Mucosa of descending colon (tissue), 3 donors: ENCODE measurements at regions of chr10 and their contacts with region 1.

Region 1: DNA sequence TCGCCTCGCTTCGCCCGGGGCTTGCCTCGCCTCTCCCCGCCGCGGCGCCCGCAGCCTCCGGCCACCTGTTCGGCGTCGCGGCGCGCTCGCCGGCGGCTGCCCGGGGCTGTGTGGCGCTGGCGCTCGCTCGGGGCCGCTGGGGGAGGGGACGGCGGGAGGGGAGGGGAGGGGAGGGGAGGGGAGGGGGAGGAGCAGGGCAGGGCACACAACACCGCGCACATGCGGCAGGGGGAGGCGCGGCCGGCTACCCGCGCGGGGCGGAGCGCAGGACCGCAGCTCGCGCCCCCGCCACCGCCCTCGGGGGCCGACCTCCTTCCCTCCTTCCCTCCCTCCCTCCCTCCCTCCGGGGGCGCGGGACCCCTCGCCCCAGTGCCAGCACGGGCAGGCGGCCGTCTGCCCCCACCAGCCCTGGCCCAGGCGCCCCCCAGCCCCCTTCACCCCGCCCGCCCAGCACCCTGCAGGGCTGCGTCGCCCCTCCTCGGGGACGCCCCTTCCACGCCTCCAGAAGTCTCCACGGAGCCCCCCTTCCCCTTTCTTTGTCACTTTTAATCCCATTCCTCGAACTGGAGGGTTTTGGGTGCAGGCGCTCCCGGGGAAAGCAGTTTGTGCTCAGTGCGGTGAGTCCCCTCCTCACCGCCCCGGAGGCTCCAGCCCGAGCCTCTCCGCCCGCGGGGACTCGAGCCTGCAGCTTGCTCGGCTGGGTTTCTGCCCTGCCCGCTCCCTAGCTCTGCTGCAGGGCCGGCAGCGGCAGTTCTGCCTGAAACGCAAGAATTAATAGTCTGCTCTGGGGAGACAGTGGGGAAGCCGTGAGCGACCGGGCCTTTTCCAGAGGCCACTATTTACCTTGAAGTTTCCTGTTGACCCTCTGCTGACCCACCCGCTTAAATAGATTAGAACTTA is at the start of gene PARD3:
- DNase-seq: peak; percentile 66 to 81 (median 76)
- ATAC-seq: peak; percentile 83
- H3K4me3 ChIP-seq: peak within 1 kb of the TSS; percentile 90
- H3K4me1 ChIP-seq: peaks cover 4% of the 10 kb centered on the region
- CTCF ChIP-seq: no peak
- total RNA-seq, gene PARD3: 39.5 to 87.9 (median 47.0) TPM

Region 2: DNA sequence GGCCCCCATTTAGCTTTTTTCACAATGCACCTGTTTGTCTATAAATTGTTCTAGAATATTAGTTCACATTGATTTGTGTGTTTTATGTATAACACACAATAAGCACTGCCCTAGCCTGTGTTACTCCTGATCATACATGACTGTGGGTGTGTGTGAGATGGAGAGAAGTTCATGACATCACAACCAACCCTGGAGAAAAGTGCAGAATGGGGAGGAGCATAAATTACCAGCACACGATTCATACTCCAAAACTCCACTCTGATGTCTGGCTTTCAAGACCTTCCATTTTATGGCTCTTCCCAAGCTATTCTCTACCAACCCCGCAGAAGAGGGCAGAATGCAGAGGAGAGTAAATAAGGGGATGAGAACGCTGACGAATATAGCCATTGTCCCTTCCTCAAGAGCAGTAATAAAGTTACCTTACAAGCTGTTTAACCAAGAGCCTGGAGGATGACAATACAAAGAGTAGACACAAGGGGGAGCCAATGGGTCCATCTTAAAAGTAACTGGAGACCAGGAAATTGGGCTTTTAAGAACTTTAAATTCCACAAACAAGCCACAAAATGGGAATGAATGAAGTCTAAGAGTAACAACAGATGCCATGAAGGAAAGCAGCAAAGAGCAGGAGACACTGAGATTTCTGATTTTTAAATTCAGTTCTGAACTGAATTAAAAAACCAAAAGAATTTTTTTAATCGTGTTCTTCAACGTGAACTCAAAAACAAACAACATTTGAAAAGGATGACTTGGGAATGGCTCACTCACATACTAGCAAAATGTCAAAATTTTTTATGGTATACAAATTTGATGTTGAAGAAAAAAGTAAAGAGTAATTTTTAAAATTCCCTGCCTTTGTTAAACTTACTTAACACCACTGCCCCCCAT is 159.9 kb before region 1 on chr10:
- intact Hi-C with region 1: loop called in 1 of 2 experiments (anchors 10 kb)
- DNase-seq: peak in 1 of 3 donors; percentile 89
- ATAC-seq: peak; percentile 87
- H3K4me3 ChIP-seq: no peak overlapping the region
- H3K4me1 ChIP-seq: peaks cover 7% of the 10 kb centered on the region
- CTCF ChIP-seq: peak; percentile 47

Region 3: GRCh38 chr10:34723750-34724149 is 91.7 kb before region 1 on chr10:
- intact Hi-C with region 1: loop called in 1 of 2 experiments (anchors 10 kb)
- DNase-seq: peak in 2 of 3 donors; percentile 51 to 81
- ATAC-seq: peak; percentile 94
- H3K4me3 ChIP-seq: no peak overlapping the region
- H3K4me1 ChIP-seq: peaks cover 3% of the 10 kb centered on the region
- CTCF ChIP-seq: no peak